ENCODE measurements at regions of chr13 and their contacts with region 1.

Region 1: DNA sequence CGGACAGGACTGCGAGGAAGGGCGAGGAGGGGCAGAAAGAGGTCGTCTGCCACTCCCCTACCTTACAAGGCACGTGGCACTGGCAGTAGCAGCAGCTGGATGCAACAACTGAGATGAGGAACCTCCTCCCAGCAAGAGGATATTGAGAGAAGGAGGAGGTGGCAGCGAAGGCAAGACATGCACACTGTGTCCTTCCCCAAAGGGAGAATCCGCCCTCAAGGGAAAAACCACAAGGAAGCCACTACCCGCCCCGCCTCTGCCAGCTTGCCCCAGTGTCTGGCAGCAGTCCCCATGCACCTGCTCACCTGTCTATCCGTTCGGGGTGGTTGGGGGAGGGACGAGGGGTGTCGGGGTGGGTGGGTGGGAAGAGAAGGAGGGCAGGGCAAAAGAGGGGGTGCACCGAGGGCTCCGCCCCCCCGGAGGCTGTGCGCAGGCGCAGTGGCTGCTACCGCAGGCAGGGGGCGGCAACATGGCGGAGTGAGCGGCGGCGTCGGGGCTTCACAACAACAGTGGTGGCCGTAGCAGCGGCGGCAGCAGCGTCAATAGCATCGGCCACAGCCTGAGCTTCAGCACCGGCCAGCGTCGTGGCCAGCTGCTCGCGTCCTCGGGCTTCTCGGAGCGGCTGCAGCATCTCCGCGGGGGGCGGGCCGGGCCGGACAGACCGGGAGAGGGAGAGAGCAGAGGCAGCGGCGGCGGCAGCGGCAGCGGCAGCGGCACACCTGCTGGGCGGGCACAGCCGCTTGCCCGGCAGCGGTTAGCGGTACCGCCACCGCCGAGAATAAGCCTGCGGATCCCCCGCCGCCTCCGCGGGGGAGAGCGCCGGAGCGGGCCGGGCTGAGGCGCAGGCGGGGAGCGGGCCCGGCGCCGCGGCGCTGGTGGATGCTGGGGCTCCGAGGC is at the start of gene NBEA:
- DNase-seq: peak; percentile 80
- H3K4me3 ChIP-seq: peak within 1 kb of the TSS; percentile 60 to 83 (median 70)
- H3K27ac ChIP-seq: no peak within 1 kb of the TSS
- H3K4me1 ChIP-seq: peaks cover 13% of the 10 kb centered on the region
- H3K27me3 ChIP-seq: peaks cover 0 to 12% of the 10 kb centered on the region in 2 experiments
- CTCF ChIP-seq: no peak
- POLR2A ChIP-seq: peak; percentile 29
- total RNA-seq, gene NBEA: 4.4 and 4.8 TPM in 2 replicates

Region 2: GRCh38 chr13:33204130-33204927 is 1737.8 kb before region 1 on chr13:
- CTCF ChIA-PET with region 1: no interaction called
- POLR2A ChIA-PET with region 1: no interaction called
- dilution Hi-C with region 1: no loop called
- intact Hi-C with region 1: loop called (anchors 10 kb)
- DNase-seq: peak; percentile 89
- H3K4me3 ChIP-seq: no peak overlapping the region
- H3K27ac ChIP-seq: peak overlapping the region; percentile 76
- H3K4me1 ChIP-seq: peaks cover 54% of the 10 kb centered on the region
- H3K27me3 ChIP-seq: no peaks in the 10 kb centered on the region
- CTCF ChIP-seq: no peak
- POLR2A ChIP-seq: no peak

Region 3: DNA sequence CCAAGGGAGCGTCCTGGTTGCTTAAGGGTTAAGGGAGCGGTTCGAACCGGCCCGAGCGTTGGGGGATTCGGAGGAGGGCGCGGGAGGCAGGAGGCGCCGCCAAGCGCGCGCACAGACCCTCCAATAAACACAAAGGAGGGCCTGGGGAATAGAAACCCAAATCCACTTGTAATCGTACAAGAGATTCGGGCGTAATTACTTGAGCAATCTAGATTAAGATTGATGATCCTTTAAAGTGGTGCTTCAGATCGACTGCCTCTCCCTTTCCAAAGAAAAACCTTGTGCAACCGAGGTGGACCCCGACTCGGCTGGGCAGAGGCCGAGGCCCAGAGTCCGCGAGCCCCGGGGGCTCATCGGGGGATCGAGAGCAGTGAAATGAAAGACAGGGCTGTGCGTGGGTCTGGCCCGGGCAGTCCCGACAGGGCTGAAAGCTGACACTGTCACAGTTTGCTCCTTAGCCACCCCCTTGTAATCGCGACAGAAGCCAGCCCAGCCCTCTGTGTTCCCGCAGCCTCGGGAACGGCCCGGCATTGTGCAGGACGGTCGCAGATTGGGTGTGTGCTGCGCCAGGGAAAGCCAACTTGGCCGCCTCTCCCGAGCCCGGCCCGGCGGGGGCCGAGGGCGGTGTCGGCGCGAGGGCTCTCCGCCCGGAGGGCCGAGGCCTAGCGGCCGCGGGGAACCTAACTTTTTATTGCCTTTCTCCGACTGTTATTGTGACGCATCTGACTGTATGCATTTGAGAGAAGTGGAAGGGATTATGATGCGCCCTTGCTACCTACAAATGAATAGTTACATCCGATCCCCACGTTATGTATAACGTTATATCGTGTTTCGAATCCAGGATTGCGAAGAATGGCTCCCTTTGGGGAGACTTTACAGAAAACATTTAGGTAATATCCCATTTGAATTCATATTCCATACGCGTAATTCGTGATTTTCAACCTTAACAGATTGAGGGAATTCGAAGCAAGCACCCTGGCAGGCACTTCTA is 528.9 kb after region 1 on chr13:
- CTCF ChIA-PET with region 1: no interaction called
- POLR2A ChIA-PET with region 1: no interaction called
- dilution Hi-C with region 1: no loop called
- intact Hi-C with region 1: loop called (anchors 5 kb)
- DNase-seq: peak; percentile 32
- H3K4me3 ChIP-seq: peak overlapping the region; percentile 40 to 57 (median 52)
- H3K27ac ChIP-seq: no peak overlapping the region
- H3K4me1 ChIP-seq: peaks cover 4% of the 10 kb centered on the region
- H3K27me3 ChIP-seq: no peaks in the 10 kb centered on the region
- CTCF ChIP-seq: no peak
- POLR2A ChIP-seq: no peak